Left cardiac atrium (tissue), 4 donors: ENCODE measurements at regions of chr9 and their contacts with region 1.

Region 1: DNA sequence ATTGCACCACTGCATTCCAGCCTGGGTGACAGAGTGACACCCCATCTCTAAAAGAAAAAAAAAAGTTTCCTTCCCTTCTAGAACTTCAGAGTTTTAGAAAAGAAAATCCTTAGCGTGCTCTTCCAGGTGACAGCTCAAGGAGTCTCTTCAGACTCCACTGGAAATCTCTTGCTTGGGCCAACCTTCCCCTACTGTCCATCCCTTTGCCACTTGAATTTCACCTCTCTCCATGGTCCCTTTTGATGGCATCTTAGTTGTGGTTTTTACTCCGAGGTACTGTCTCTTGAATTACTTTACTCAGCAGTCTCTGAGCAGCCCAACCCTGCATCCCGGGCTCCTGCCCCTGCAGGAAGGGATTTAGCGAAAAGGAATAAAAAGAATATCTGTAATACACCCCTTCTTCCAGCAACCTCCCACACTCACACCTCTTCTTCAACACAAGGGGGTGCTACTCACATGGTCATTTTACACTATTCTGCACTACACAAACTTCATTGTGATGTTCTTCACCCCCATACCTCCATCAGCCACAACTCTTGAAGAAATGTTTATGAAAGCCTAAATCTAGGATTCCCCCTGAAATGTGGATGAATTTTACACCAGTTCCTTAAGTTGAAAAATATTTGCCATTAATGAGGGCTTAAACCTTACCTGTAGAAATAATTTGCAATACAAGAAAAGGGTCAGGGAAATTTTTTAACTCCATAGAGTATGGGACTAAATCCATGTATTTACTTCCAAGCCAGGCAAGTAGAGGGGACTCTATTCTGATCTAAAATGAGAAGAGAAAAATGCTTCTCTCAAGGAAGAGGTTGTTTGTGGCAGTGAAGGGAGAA is 25.9 kb downstream of the TPD52L3 start:
- DNase-seq: no peak
- ATAC-seq: peak; percentile 71 to 89

Region 2: DNA sequence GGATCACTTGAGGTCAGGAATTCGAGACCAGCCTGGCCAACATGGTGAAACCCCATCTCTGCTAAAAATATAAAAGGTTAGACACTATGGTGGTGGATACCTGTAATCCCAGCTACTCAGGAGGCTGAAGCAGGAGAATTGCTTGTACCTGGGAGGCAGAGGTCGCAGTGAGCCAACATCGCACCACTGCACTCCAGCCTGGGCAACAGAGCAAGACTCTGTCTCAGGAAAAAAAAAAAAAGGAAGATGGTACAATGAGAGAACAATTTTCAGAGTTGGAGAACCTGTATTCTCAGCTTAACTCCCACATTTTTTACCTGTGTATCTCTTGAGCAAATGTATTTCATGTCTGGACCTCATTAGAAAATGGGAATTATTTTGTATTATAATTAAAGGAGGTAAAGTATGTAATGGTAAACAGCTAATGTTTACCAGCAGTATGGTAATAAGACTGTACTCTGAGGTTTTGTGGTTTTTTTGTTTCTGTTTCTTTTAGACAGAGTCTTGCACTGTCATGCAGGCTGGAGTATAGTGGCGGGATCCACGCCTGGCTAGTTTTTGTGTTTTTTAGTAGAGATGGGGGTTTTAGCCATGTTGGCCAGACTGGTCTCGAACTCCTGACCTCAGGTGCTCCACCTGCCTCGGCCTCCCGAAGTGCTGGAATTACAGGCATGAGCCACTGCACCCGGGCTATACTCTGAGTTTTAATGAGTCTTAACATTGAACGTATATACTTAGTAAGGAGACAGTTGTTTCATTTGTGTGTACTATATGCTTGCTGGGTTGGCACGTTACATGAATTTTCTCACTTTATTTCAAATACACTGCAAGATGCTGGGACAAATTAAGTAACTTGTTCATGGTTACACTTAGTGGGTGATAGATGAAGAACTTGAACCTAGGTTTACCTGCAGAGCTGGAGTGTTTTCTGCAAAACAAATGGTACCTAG is 75.1 kb after region 1 on chr9:
- intact Hi-C with region 1: no loop called
- DNase-seq: no peak
- ATAC-seq: peak in 1 of 2 donors; percentile 30

Region 3: DNA sequence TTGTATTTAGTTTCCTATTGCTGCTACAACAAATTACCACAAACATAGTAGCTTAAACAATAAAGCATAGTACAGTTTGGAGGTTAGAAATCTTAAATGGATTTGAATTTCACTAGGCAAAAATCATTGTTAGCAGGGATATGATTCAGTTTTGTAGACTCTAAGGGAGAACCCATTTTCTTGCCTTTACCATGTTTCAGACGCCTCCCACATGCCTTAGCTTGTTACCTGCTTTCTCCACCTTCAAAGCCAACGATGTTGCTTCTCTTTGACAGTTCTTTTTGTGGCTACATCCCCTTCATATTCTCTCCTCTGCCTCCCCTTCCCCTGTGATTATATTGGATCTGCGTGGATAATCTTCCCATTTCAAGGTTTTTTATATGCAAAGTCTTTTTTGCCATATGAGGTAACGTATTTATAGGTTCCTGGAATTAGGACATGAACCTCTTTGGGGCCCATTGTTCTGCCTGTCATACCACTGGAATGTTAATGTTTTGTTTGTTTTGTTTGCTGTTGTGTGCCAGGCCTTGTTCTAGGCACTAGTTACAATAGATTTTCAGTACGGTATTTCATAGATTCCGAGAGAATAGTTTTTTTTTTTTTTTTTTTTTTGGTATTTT is 113.0 kb after region 1 on chr9:
- intact Hi-C with region 1: no loop called
- DNase-seq: no peak
- ATAC-seq: no peak

Region 4: GRCh38 chr9:6498982-6499381 is 144.9 kb after region 1 on chr9:
- intact Hi-C with region 1: loop called in 1 of 2 experiments (anchors 10 kb)
- DNase-seq: no peak
- ATAC-seq: no peak

Region 5: GRCh38 chr9:6566409-6567139 is 212.5 kb after region 1 on chr9:
- intact Hi-C with region 1: loop called (anchors 2 kb)
- DNase-seq: peak; percentile 63
- ATAC-seq: peak in 1 of 2 donors; percentile 90

Region 6: GRCh38 chr9:6739218-6739617 is 385.1 kb after region 1 on chr9:
- intact Hi-C with region 1: loop called in 1 of 2 experiments (anchors 10 kb)
- DNase-seq: no peak
- ATAC-seq: no peak